Activated T-helper 1 cell treated with anti-CD3 and anti-CD28 coated beads, Interleukin-12 subunit alpha, Interleukin-12 subunit beta, Interleukin-2, Interleukin-4 antibody, amounts not matched to agents 30 ng/mL and 10 ng/mL and 1 ng/mL, durations not matched to agents 14 hours and 24 hours and 36 hours (primary cell): ENCODE measurements at regions of chr13 and their contacts with region 1.

Region 1: GRCh38 chr13:24097064-24097463 is 63.5 kb upstream of the SPATA13 start:
- DNase-seq: peak; percentile 7
- H3K4me3 Mint-ChIP-seq: peak overlapping the region; percentile 62
- H3K27ac Mint-ChIP-seq: peak overlapping the region; percentile 95
- H3K4me1 Mint-ChIP-seq: peaks cover 21% of the 10 kb centered on the region
- H3K27me3 Mint-ChIP-seq: peaks cover 15% of the 10 kb centered on the region

Region 2: GRCh38 chr13:23752111-23753001 is 344.7 kb before region 1 on chr13:
- intact Hi-C with region 1: loop called (anchors 1 kb)
- DNase-seq: no peak
- H3K4me3 Mint-ChIP-seq: no peak overlapping the region
- H3K27ac Mint-ChIP-seq: no peak overlapping the region
- H3K4me1 Mint-ChIP-seq: peaks cover 29% of the 10 kb centered on the region
- H3K27me3 Mint-ChIP-seq: peaks cover 4% of the 10 kb centered on the region

Region 3: DNA sequence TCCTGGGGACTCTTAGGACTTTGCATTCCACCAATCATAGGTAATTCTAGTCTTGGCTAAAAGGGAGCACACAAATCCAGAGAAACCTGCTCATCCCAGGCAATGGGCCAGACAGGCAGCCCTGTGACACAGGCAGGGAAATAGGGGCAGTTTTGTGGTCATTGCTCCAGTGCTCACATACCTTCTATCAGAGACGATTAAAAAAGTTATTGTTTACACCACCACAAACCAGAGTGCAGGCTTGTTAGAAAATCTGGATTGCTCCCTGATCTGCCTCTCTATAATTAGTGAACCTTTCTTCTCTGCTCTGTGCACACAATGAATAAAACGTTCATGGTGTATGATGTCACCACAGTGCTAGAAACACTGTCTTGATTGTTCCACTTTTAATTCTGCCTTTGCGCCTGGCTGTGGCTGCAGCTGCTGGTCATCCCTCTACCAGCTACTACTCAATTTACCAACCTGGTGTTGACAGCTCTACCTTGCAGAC is 58.2 kb before region 1 on chr13:
- intact Hi-C with region 1: loop called (anchors 1 kb)
- DNase-seq: no peak
- H3K4me3 Mint-ChIP-seq: peak overlapping the region; percentile 30
- H3K27ac Mint-ChIP-seq: peak overlapping the region; percentile 51
- H3K4me1 Mint-ChIP-seq: peaks cover 44% of the 10 kb centered on the region
- H3K27me3 Mint-ChIP-seq: peaks cover 3% of the 10 kb centered on the region

Region 4: GRCh38 chr13:24160454-24161009 is 63.5 kb after region 1 on chr13 and contains the start of gene SPATA13:
- intact Hi-C with region 1: loop called (anchors 1 kb)
- DNase-seq: peak; percentile 86
- H3K4me3 Mint-ChIP-seq: peak within 1 kb of the TSS; percentile 92
- H3K27ac Mint-ChIP-seq: peak within 1 kb of the TSS; percentile 76
- H3K4me1 Mint-ChIP-seq: peaks cover 26% of the 10 kb centered on the region
- H3K27me3 Mint-ChIP-seq: peaks cover 7% of the 10 kb centered on the region
- total RNA-seq, gene SPATA13: 56.2 and 56.3 TPM in 2 replicates

Region 5: DNA sequence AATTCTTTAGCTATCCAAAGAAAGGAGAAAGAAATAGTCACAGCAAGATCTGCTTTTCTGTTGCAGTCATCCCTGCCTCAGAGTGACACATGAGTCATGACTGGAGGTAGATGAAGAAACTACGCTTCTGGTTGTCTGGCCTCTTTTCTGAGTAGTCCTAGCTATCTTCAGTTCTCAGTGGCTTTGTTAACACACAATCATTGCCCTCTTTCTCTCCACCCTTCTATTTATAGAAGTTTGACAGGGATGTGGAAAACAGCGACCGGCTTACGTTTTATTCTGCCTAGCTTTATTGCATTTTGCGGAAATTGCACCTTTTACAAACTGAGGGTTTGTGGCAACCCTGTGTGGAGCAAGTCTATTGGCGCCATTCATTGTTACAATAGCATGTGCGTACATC is 90.1 kb after region 1 on chr13:
- intact Hi-C with region 1: loop called (anchors 1 kb)
- DNase-seq: peak; percentile 3
- H3K4me3 Mint-ChIP-seq: peak overlapping the region; percentile 42
- H3K27ac Mint-ChIP-seq: peak overlapping the region; percentile 86
- H3K4me1 Mint-ChIP-seq: peaks cover 63% of the 10 kb centered on the region
- H3K27me3 Mint-ChIP-seq: no peaks in the 10 kb centered on the region

Region 6: DNA sequence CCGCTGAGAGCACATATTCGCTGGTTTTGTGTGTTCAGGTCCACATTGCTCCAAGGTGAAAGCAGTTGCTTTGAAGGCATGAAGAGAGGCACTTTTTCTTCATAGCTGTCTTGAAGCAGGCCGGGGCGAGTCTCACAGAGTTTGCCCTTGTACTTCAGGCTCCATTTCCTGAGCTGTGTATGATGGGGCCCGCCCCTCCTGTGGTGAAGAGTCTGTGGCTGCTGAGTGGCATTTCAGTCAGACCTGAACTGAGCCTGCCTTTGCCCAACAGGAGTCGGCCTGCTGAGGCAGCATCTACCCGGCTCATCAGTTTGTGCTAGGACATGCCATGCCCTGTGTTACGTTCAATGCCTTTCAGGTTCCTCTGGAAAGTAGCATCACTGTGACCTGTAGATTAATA is 167.9 kb after region 1 on chr13:
- intact Hi-C with region 1: loop called (anchors 2 kb)
- DNase-seq: peak; percentile 76
- H3K4me3 Mint-ChIP-seq: peak overlapping the region; percentile 45
- H3K27ac Mint-ChIP-seq: peak overlapping the region; percentile 78
- H3K4me1 Mint-ChIP-seq: peaks cover 83% of the 10 kb centered on the region
- H3K27me3 Mint-ChIP-seq: no peaks in the 10 kb centered on the region